HCT116 (cell line): ENCODE measurements at regions of chr3 and their contacts with region 1.

Region 1: DNA sequence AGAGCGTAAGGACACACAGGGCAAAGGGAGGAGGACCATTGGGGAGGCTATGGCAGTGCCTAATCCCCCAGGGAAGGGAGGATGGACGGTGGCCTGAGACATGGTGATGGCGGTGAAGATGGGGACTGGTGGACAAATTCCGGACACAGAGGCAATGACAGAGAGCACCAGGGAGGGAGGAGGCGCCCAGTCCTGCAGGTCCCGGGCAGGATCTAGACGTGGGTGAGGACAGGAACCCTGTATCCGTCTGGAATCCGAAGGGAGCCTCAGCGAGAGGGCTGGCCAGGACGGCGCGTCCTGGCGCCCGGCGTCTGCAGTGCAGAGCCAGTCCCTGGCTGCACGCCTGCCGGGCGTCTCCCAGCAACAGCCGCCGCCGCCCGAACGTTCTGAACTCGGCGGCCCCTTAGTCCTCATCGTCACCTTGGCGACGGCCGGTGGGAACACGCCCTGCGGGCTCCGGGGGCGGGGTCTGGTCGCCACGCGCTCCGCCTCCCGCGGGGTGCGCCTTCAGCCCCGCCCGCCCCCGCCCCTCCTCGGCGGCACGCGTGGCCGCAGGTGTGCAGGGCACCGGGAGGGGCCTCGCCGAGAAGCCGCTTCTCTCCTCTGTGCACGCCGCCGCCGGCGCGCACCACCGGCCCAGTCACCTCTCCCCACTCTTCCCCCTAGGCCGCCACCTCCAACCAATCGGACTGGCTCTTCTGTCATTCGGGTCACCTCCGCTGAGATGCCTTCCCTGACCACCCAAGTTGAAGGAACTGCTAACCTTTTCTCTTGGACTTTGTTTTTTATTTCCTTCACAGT is 11.6 kb downstream of the XIRP1 start:
- DNase-seq: peak; percentile 77
- ATAC-seq: peak; percentile 89
- H3K4me3 ChIP-seq: peak overlapping the region; percentile 38 to 57
- H3K27ac ChIP-seq: peak overlapping the region; percentile 10; the same call in 1 of the 2 replicates
- H3K4me1 ChIP-seq: peaks cover 38 to 51% of the 10 kb centered on the region in 2 experiments
- H3K27me3 ChIP-seq: no peaks in the 10 kb centered on the region
- CTCF ChIP-seq: 0 out of 6 replicates have a peak, but pooled peaks of 1 of the 3 experiments have one; percentile 8
- POLR2A ChIP-seq: no peak
- RAD21 ChIP-seq: no peak

Region 2: DNA sequence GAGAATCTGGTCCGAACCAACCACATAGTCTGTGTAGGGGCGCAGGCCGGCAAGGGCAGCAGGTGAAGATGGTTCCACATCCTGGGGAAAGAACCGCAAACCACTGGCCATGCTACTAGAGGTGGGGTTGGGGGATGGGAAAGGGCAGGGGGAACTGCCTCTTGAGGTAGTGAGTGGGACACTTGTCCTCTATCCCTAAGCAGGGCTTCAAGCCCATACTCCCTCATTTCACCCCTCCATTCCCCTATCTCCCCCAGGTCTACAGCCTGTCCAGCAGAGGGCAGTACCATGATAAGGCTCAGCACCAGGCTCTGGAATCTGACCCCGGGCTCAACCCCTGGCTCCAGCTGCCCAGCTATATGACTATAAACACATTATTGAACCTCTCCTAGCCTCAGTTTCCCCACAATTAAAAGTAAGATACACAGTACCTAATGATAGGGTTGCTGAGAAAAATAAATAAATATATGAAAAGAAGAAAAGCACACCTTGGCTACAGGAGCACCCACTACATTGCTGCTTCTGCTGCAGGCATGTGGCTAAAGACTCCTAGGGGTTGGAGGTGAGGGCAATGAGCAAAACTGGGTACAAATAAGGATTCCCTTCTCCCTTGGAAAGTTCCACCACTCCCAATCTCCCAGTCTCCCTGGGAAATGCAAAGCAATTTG is 79.6 kb before region 1 on chr3:
- CTCF ChIA-PET with region 1: no interaction called
- POLR2A ChIA-PET with region 1: no interaction called
- RAD21 ChIA-PET with region 1: no interaction called
- intact Hi-C with region 1: loop called (anchors 5 kb)
- DNase-seq: no peak
- ATAC-seq: peak; percentile 87
- H3K4me3 ChIP-seq: no peak overlapping the region
- H3K27ac ChIP-seq: no peak overlapping the region
- H3K4me1 ChIP-seq: peaks cover 7 to 8% of the 10 kb centered on the region in 2 experiments
- H3K27me3 ChIP-seq: no peaks in the 10 kb centered on the region
- CTCF ChIP-seq: peak; percentile 69 to 88 (median 81); a peak in 5 of 6 replicates
- POLR2A ChIP-seq: no peak
- RAD21 ChIP-seq: peak; percentile 80

Region 3: GRCh38 chr3:39241561-39241960 is 60.8 kb after region 1 on chr3:
- CTCF ChIA-PET with region 1: no interaction called
- POLR2A ChIA-PET with region 1: no interaction called
- RAD21 ChIA-PET with region 1: no interaction called
- intact Hi-C with region 1: no loop called
- DNase-seq: no peak
- ATAC-seq: no peak
- H3K4me3 ChIP-seq: no peak overlapping the region
- H3K27ac ChIP-seq: no peak overlapping the region
- H3K4me1 ChIP-seq: no peaks in the 10 kb centered on the region
- H3K27me3 ChIP-seq: peaks cover 8% of the 10 kb centered on the region
- CTCF ChIP-seq: no peak
- POLR2A ChIP-seq: no peak
- RAD21 ChIP-seq: no peak